ENCODE measurements at regions of chr10 and their contacts with region 1.

Region 1: DNA sequence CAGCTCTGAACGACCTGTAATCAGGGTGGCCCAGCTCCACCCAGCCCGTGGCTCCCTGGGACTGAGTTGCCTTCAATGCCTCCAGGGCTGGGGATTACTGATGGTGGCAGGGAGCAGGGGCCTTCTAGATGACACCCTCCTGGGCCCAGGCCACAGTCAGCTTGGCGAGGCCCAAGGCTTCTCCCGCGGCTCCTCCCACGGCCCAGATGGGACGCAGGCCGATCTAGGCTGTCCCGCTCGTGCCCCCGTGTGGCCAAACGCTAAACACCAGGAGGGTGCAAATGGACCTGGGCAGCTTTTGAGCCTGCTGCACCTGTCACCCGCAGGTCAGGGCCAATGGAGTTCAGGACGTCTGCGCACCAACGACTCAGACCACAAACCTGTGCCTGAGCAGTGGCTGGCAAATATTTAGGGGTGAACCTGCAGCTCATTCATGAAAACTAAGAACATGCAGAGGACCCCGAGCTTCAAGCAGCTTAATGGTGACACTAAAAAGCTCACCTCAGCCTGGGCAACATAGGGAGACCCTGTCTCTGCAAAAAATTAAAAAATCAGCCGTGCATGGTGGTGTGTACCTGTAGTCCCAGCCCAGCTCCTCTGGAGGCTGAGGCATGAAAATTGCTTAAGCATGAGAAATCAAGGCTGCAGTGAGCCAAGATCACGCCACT is 43.2 kb downstream of the ASB13 start:
- DNase-seq: peak; percentile 88 to 91
- ATAC-seq: peak; percentile 88 to 92 (median 91)
- H3K4me3 ChIP-seq: no peak overlapping the region
- H3K27ac ChIP-seq: peak overlapping the region in 1 of 10 donors; percentile 34
- H3K4me1 ChIP-seq: peaks cover 0 to 26% (median 16%) of the 10 kb centered on the region in 9 donors
- H3K27me3 ChIP-seq: no peaks in the 10 kb centered on the region
- CTCF ChIP-seq: peak; percentile 86 to 96 (median 93)

Region 2: DNA sequence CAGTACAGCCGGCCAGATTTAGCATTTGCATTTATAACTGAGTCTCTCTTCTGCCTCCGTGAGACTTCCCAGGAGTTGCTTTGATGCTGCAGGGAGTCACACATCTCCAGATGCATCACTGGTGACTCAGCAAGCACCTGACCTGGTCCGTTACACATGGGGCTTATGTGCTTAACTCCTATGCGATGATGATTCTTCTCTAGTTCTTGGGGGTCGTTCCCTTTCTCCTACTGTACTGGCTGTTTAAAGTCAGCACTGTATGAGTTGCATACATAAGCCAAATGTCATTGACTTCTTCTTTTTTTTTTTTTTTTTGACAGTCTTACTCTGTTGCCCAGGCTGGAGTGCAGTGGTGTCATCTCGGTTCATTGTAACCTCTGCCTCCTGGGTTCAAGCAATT is 810.2 kb before region 1 on chr10:
- intact Hi-C with region 1: loop called in 1 of 10 experiments (anchors 10 kb)
- DNase-seq: no peak
- ATAC-seq: no peak
- H3K4me3 ChIP-seq: no peak overlapping the region
- H3K27ac ChIP-seq: no peak overlapping the region
- H3K4me1 ChIP-seq: peaks cover 0 to 27% (median 0%) of the 10 kb centered on the region in 9 donors
- H3K27me3 ChIP-seq: no peaks in the 10 kb centered on the region
- CTCF ChIP-seq: no peak

Region 3: GRCh38 chr10:4825851-4826665 is 797.2 kb before region 1 on chr10 and contains the start of gene AKR1E2:
- intact Hi-C with region 1: loop called in 1 of 10 experiments (anchors 10 kb)
- DNase-seq: peak; percentile 90 to 94
- ATAC-seq: peak; percentile 93 to 96 (median 95)
- H3K4me3 ChIP-seq: peak within 1 kb of the TSS; percentile 51 to 77 (median 68)
- H3K27ac ChIP-seq: peak within 1 kb of the TSS; percentile 69 to 98 (median 94)
- H3K4me1 ChIP-seq: peaks cover 0 to 19% (median 8%) of the 10 kb centered on the region in 9 donors
- H3K27me3 ChIP-seq: peaks cover 0 to 8% (median 0%) of the 10 kb centered on the region in 7 donors
- CTCF ChIP-seq: peak in 1 of 9 donors; percentile 6
- total RNA-seq, gene AKR1E2: 2.0 to 6.5 (median 4.8) TPM

Region 4: DNA sequence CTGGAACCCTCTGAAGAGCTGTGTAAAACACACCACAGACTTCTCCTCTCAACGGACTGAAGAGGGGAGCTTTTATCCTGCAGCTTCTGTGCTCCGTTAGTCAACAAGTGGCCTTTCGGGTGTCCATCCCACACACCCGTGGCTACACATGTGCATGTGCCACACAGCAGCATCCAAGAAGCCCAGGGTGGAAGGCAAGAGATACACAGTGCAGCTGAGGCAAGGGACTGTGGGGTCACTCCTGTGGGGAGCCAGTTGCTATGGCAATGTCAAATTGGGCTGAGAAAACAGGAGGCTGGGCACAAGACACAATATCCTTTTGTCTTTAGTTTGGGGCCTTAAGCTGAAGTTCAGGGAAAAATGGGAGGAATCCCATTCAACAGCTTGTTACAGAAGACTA is 182.1 kb before region 1 on chr10:
- intact Hi-C with region 1: loop called (anchors 1 to 5 kb)
- DNase-seq: no peak
- ATAC-seq: no peak
- H3K4me3 ChIP-seq: no peak overlapping the region
- H3K27ac ChIP-seq: no peak overlapping the region
- H3K4me1 ChIP-seq: peaks cover 0 to 7% (median 3%) of the 10 kb centered on the region in 9 donors
- H3K27me3 ChIP-seq: no peaks in the 10 kb centered on the region
- CTCF ChIP-seq: no peak

Region 5: GRCh38 chr10:5446390-5446926 is 176.8 kb before region 1 on chr10:
- intact Hi-C with region 1: loop called (anchors 1 to 5 kb)
- DNase-seq: peak; percentile 88 to 89
- ATAC-seq: peak; percentile 95 to 98 (median 97)
- H3K4me3 ChIP-seq: peak overlapping the region; percentile 5 to 64 (median 56)
- H3K27ac ChIP-seq: peak overlapping the region in 9 of 10 donors; percentile 42 to 77 (median 59)
- H3K4me1 ChIP-seq: peaks cover 0 to 43% (median 7%) of the 10 kb centered on the region in 9 donors
- H3K27me3 ChIP-seq: no peaks in the 10 kb centered on the region
- CTCF ChIP-seq: no peak

Region 6: DNA sequence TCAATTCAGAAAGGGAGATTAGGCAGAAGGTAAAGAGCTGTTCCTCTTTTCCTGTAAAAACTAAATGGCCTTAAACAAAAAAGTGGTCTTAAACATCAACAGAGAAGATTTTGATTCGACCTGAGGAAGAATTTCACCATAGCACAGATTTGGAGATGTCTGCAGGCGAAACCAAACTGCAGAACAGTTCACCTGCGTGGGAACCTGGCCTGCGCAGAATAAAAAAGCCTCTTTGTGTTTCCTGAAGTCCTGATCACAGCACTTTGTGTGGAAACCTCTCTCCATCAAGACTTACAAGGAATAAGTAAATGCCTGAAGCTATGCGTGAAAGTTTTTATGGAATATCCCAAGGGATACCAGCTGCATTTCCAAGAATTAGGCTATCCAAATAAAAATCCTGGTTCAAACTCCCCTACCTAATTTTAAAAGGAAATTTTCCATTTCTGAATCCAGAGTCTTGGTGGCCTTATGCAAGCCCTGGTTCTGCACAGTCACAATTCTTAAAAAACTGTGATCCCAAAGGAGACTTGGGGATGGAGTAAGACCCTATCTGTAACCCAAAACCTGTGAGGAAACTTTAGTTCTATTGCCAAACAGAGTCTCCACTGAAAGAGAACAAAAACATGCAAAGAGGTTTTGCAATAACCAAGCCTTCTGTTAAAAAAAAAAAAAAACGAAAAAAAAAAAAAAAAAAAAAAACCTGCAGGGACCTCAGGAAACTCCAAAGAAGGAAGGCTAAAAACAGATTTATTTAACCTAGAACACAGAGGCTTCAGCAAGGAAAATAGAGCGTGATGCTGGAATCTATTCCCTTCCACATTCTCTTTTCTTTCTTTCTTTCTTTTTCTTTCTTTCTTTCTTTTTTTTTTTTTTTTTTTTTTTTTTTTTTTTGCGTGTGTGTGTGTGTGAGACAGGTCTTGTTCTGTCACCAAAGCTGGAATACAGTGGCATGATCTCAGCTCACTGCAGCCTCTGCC is 88.0 kb before region 1 on chr10:
- intact Hi-C with region 1: loop called in 2 of 10 experiments (anchors 10 kb)
- DNase-seq: no peak
- ATAC-seq: peak; percentile 54 to 91 (median 78)
- H3K4me3 ChIP-seq: no peak overlapping the region
- H3K27ac ChIP-seq: peak overlapping the region in 6 of 10 donors; percentile 8 to 54 (median 26)
- H3K4me1 ChIP-seq: peaks cover 0 to 25% (median 7%) of the 10 kb centered on the region in 9 donors
- H3K27me3 ChIP-seq: no peaks in the 10 kb centered on the region
- CTCF ChIP-seq: no peak

Region 7: DNA sequence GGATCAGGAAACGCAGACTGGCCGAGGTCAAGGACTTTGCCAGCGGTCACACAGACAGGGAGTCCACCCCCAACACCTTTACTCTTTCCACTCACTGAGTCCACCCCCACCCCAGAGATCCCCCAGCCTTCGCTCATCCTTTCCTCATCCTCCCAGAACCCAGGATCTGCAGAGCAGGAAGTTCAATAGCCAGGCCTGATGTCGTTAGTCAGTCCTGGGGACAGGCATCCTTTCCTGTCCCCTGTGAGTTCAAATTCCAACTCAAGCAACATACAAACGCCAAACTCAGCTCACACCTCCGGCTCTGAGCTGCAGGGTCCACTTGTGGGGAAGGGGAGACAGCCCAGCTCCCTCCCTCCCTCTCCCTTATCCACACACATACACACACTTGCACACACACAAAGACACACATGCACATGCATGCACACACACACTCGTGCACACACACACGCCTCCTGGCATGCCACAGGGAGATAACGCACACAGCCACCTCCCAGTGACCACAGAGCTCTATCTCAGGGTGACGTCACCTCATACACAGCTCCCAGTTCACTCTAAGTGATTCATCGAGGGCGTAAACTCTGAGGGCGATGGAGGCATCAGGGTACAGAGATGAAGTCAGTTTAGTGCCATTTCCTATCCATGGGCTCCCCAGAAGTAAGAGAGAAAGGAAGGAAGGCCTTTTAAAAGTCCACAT is 74.5 kb before region 1 on chr10:
- intact Hi-C with region 1: loop called in 1 of 10 experiments (anchors 5 kb)
- DNase-seq: peak; percentile 43 to 54
- ATAC-seq: peak; percentile 35 to 89 (median 70)
- H3K4me3 ChIP-seq: no peak overlapping the region
- H3K27ac ChIP-seq: peak overlapping the region in 9 of 10 donors; percentile 22 to 71 (median 66)
- H3K4me1 ChIP-seq: peaks cover 3 to 49% (median 36%) of the 10 kb centered on the region in 9 donors
- H3K27me3 ChIP-seq: no peaks in the 10 kb centered on the region
- CTCF ChIP-seq: no peak

Measured in heart right ventricle (tissue), 16 donors.